ENCODE measurements at regions of chr11 and their contacts with region 1.

Region 1: GRCh38 chr11:5380740-5381342 is 2.8 kb upstream of the OR51M1 start:
- DNase-seq: peak; percentile 55
- H3K4me3 ChIP-seq: no peak overlapping the region
- H3K27ac ChIP-seq: no peak overlapping the region
- H3K27me3 ChIP-seq: no peaks in the 10 kb centered on the region
- CTCF ChIP-seq: peak; percentile 93

Region 2: GRCh38 chr11:5204787-5205186 is 176.1 kb before region 1 on chr11:
- CTCF ChIA-PET with region 1: interaction called, 63 read pairs
- POLR2A ChIA-PET with region 1: no interaction called
- DNase-seq: peak; percentile 58
- H3K4me3 ChIP-seq: no peak overlapping the region
- H3K27ac ChIP-seq: no peak overlapping the region
- H3K27me3 ChIP-seq: no peaks in the 10 kb centered on the region
- CTCF ChIP-seq: peak; percentile 67

Region 3: GRCh38 chr11:5369793-5370192 is 11.0 kb before region 1 on chr11:
- CTCF ChIA-PET with region 1: interaction called, 14 read pairs
- POLR2A ChIA-PET with region 1: no interaction called
- DNase-seq: peak; percentile 75
- H3K4me3 ChIP-seq: no peak overlapping the region
- H3K27ac ChIP-seq: no peak overlapping the region
- H3K27me3 ChIP-seq: no peaks in the 10 kb centered on the region
- CTCF ChIP-seq: peak; percentile 84

Region 4: DNA sequence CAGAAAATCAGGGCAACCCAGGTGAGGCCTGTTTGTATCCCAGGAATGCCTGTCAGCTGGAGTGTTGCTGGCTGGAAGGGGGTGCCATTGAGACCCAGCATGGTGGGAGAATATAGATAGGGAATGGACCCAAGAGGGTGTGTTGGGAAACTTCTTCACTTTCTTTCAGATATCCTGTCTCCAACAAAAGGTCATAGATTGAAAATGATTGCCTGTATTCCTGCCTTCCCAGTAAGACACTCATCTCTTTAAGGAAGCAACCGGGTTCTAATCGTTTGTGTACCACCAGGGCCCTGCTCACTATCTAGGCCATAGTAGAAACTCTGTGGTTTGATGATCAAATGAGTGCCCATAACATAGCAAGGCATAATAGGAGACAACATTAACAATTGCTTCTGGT is 60.6 kb after region 1 on chr11 and contains the start of gene OR51I1:
- CTCF ChIA-PET with region 1: no interaction called
- POLR2A ChIA-PET with region 1: no interaction called
- DNase-seq: no peak
- H3K4me3 ChIP-seq: no peak within 1 kb of the TSS
- H3K27ac ChIP-seq: no peak within 1 kb of the TSS
- H3K27me3 ChIP-seq: no peaks in the 10 kb centered on the region
- CTCF ChIP-seq: no peak
- polyA plus RNA-seq, gene OR51I1: not detected in 2 replicates